OCI-LY7 (cell line): ENCODE measurements at regions of chr9 and their contacts with region 1.

Region 1: GRCh38 chr9:90420768-90421513 is 221.7 kb downstream of the DIRAS2 start:
- DNase-seq: no peak
- H3K4me3 ChIP-seq: no peak overlapping the region
- H3K27ac ChIP-seq: no peak overlapping the region
- H3K4me1 ChIP-seq: no peaks in the 10 kb centered on the region
- CTCF ChIP-seq: no peak

Region 2: GRCh38 chr9:90477535-90477934 is 56.6 kb after region 1 on chr9:
- CTCF ChIA-PET with region 1: no interaction called
- POLR2A ChIA-PET with region 1: no interaction called
- intact Hi-C with region 1: no loop called
- DNase-seq: no peak
- H3K4me3 ChIP-seq: no peak overlapping the region
- H3K27ac ChIP-seq: no peak overlapping the region
- H3K4me1 ChIP-seq: no peaks in the 10 kb centered on the region
- CTCF ChIP-seq: no peak

Region 3: GRCh38 chr9:90499761-90500160 is 78.8 kb after region 1 on chr9:
- CTCF ChIA-PET with region 1: no interaction called
- POLR2A ChIA-PET with region 1: no interaction called
- intact Hi-C with region 1: loop called (anchors 10 kb)
- DNase-seq: no peak
- H3K4me3 ChIP-seq: no peak overlapping the region
- H3K27ac ChIP-seq: no peak overlapping the region
- H3K4me1 ChIP-seq: no peaks in the 10 kb centered on the region
- CTCF ChIP-seq: no peak